ENCODE measurements at regions of chr17 and their contacts with region 1.

Region 1: GRCh38 chr17:78176548-78177025 is 8.2 kb downstream of the SYNGR2 start:
- DNase-seq: peak; percentile 74 to 85
- ATAC-seq: peak in 3 of 4 donors; percentile 15 to 38 (median 20)
- H3K4me3 ChIP-seq: no peak overlapping the region
- H3K27ac ChIP-seq: peak overlapping the region; percentile 98
- H3K4me1 ChIP-seq: peaks cover 65% of the 10 kb centered on the region
- H3K27me3 ChIP-seq: no peaks in the 10 kb centered on the region
- CTCF ChIP-seq: peak; percentile 84

Region 2: GRCh38 chr17:78118801-78119241 is 57.8 kb before region 1 on chr17:
- intact Hi-C with region 1: no loop called
- DNase-seq: no peak
- ATAC-seq: no peak
- H3K4me3 ChIP-seq: no peak overlapping the region
- H3K27ac ChIP-seq: no peak overlapping the region
- H3K4me1 ChIP-seq: no peaks in the 10 kb centered on the region
- H3K27me3 ChIP-seq: peaks cover 0 to 2% (median 0%) of the 10 kb centered on the region in 3 donors
- CTCF ChIP-seq: no peak

Region 3: GRCh38 chr17:78140169-78140976 is 36.2 kb before region 1 on chr17:
- intact Hi-C with region 1: loop called in 1 of 2 experiments (anchors 5 kb)
- DNase-seq: peak; percentile 90 to 95
- ATAC-seq: peak; percentile 92 to 94 (median 92)
- H3K4me3 ChIP-seq: peak overlapping the region; percentile 54
- H3K27ac ChIP-seq: peak overlapping the region; percentile 41
- H3K4me1 ChIP-seq: peaks cover 27% of the 10 kb centered on the region
- H3K27me3 ChIP-seq: no peaks in the 10 kb centered on the region
- CTCF ChIP-seq: no peak

Measured in psoas muscle (tissue), 8 donors.